CD8-positive, alpha-beta T cell (primary cell): ENCODE measurements at regions of chr5 and their contacts with region 1.

Region 1: GRCh38 chr5:132466433-132467286 is 23.9 kb downstream of the IRF1 start:
- DNase-seq: peak; percentile 53 to 92 (median 74)
- ATAC-seq: peak; percentile 63
- H3K4me3 ChIP-seq: peak overlapping the region; percentile 25 to 28
- H3K4me3 Mint-ChIP-seq: peak overlapping the region; percentile 68
- H3K27ac ChIP-seq: peak overlapping the region; percentile 51 to 85
- H3K27ac Mint-ChIP-seq: peak overlapping the region; percentile 95
- H3K4me1 ChIP-seq: peaks cover 88% of the 10 kb centered on the region
- H3K4me1 Mint-ChIP-seq: peaks cover 96% of the 10 kb centered on the region
- H3K27me3 ChIP-seq: no peaks in the 10 kb centered on the region
- H3K27me3 Mint-ChIP-seq: no peaks in the 10 kb centered on the region
- CTCF ChIP-seq: no peak

Region 2: DNA sequence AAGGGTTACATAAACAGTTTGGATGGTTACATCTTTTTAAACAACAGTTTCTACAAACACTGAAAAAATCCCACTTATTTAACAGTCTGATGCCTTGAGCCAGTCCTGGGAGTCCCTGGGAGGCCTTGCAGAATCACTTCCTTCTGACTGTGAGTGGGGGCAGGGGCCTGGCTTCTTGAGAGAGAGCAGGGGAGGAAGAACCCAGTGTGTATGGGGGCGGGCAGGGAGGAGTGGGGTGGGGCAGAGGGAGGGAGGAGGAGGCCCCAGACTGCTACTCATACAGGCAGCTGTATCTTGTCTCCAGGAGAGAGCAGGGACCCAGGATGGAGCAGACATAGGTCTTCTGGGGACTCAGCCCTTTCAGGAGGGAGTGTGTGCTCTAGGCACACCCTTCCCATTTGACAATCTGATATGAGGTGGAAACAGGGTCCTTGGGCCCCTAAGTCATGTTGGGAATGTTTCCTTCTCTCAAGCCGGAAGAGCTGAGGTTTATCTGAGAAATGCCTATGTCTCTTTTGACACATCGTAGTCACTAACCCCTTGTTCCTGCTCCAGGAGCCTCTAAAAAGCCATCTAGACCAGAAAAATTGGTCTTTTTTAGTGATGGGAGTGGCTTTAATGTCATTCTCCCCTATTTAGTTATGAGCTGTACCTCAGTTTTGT is 28.9 kb before region 1 on chr5:
- CTCF ChIA-PET with region 1: interaction called, 31 read pairs
- POLR2A ChIA-PET with region 1: interaction called, 132 read pairs
- intact Hi-C with region 1: no loop called
- DNase-seq: peak in 8 of 9 experiments; percentile 43 to 85 (median 67)
- ATAC-seq: peak; percentile 92
- H3K4me3 ChIP-seq: no peak overlapping the region
- H3K4me3 Mint-ChIP-seq: peak overlapping the region; percentile 63
- H3K27ac ChIP-seq: peak overlapping the region; percentile 31 to 77
- H3K27ac Mint-ChIP-seq: peak overlapping the region; percentile 87
- H3K4me1 ChIP-seq: peaks cover 88% of the 10 kb centered on the region
- H3K4me1 Mint-ChIP-seq: peaks cover 90% of the 10 kb centered on the region
- H3K27me3 ChIP-seq: no peaks in the 10 kb centered on the region
- H3K27me3 Mint-ChIP-seq: no peaks in the 10 kb centered on the region
- CTCF ChIP-seq: no peak

Region 3: GRCh38 chr5:132446669-132447068 is 20.0 kb before region 1 on chr5:
- CTCF ChIA-PET with region 1: interaction called, 4 read pairs
- POLR2A ChIA-PET with region 1: interaction called, 11 read pairs
- intact Hi-C with region 1: no loop called
- DNase-seq: no peak
- ATAC-seq: no peak
- H3K4me3 ChIP-seq: no peak overlapping the region
- H3K4me3 Mint-ChIP-seq: peak overlapping the region; percentile 66
- H3K27ac ChIP-seq: peak overlapping the region in 1 of 2 experiments; percentile 47
- H3K27ac Mint-ChIP-seq: peak overlapping the region; percentile 86
- H3K4me1 ChIP-seq: peaks cover 54% of the 10 kb centered on the region
- H3K4me1 Mint-ChIP-seq: peaks cover 88% of the 10 kb centered on the region
- H3K27me3 ChIP-seq: no peaks in the 10 kb centered on the region
- H3K27me3 Mint-ChIP-seq: no peaks in the 10 kb centered on the region
- CTCF ChIP-seq: no peak